AG04450 (cell line): ENCODE measurements at regions of chr7 and their contacts with region 1.

Region 1: GRCh38 chr7:24192053-24192452 is 91.9 kb upstream of the NPY start:
- DNase-seq: peak; percentile 72
- H3K4me3 ChIP-seq: no peak overlapping the region
- H3K27ac ChIP-seq: no peak overlapping the region
- H3K27me3 ChIP-seq: no peaks in the 10 kb centered on the region
- CTCF ChIP-seq: no peak

Region 2: GRCh38 chr7:24216576-24217125 is 24.6 kb after region 1 on chr7:
- CTCF ChIA-PET with region 1: no interaction called
- POLR2A ChIA-PET with region 1: interaction called, 10 read pairs
- DNase-seq: peak; percentile 75
- H3K4me3 ChIP-seq: no peak overlapping the region
- H3K27ac ChIP-seq: no peak overlapping the region
- H3K27me3 ChIP-seq: no peaks in the 10 kb centered on the region
- CTCF ChIP-seq: no peak

Region 3: GRCh38 chr7:25424113-25424512 is 1232.1 kb after region 1 on chr7:
- CTCF ChIA-PET with region 1: no interaction called
- POLR2A ChIA-PET with region 1: no interaction called
- DNase-seq: no peak
- H3K4me3 ChIP-seq: no peak overlapping the region
- H3K27ac ChIP-seq: no peak overlapping the region
- H3K27me3 ChIP-seq: no peaks in the 10 kb centered on the region
- CTCF ChIP-seq: no peak